ENCODE measurements at regions of chr2 and their contacts with region 1.

Region 1: DNA sequence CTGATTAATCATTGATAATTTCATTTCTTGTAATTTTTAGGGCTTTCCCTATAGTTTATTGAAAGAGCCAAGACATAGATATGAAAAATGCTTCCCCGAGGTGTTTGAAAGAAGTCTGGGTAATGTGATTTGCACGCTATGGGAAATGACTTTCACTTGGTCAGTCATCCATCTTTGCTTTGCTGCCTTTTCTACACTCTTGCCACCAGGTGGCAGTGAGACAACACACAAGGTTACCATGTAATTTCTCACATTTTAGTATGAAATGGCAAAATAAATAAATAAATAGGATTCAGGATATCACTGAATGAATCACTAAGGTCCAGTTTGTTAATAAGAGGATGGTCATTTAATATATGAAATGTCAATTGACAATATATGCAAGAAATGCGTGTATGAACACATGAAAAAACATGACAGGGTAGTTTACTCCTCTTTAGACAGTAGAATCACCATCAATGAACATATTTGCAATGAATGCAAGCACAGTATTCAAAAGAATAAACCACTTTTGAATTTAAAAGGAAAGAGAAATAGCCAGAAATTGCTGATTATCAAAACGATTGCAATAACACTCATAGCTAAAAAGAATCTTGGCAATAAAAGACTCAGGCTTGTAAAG is 52.2 kb upstream of the KCNH7 start:
- DNase-seq: peak in 2 of 10 donors; percentile 16 to 30
- H3K4me3 ChIP-seq: no peak overlapping the region
- H3K27ac ChIP-seq: peak overlapping the region in 1 of 59 donors; percentile 9
- H3K27me3 ChIP-seq: no peaks in the 10 kb centered on the region
- CTCF ChIP-seq: peak; percentile 29 to 75 (median 64)

Region 2: GRCh38 chr2:162963156-162963555 is 72.4 kb after region 1 on chr2:
- intact Hi-C with region 1: no loop called
- DNase-seq: peak in 1 of 10 donors; percentile 10
- H3K4me3 ChIP-seq: no peak overlapping the region
- H3K27ac ChIP-seq: no peak overlapping the region
- H3K27me3 ChIP-seq: no peaks in the 10 kb centered on the region
- CTCF ChIP-seq: no peak

Region 3: DNA sequence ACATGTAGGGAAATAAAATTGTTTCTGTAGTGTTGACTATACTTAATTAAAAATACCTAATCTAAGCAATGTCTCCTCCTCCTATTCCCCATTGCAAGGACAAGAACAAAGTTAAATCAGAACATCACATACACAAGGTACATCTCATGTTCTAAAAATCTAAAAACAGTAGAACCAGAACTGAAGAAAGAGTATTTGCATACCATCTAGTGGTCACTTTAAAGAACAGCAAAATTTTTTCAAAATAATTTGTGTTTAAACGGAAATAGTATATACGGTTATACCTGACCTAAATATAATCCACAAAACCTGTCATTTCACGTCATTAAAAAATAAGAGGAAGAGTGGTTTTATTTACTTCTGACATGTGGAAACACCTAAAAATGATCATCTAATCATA is 242.0 kb after region 1 on chr2:
- intact Hi-C with region 1: loop called in 1 of 2 experiments (anchors 5 kb)
- DNase-seq: no peak
- H3K4me3 ChIP-seq: no peak overlapping the region
- H3K27ac ChIP-seq: no peak overlapping the region
- H3K27me3 ChIP-seq: no peaks in the 10 kb centered on the region
- CTCF ChIP-seq: peak; percentile 35 to 75 (median 58)

Measured in dorsolateral prefrontal cortex (tissue), 120 donors.